ENCODE measurements at regions of chr16 and their contacts with region 1.

Region 1: GRCh38 chr16:10737068-10737625 is 6.5 kb upstream of the NUBP1 start:
- DNase-seq: peak; percentile 80
- H3K4me3 Mint-ChIP-seq: no peak overlapping the region
- H3K27ac Mint-ChIP-seq: no peak overlapping the region
- H3K4me1 Mint-ChIP-seq: no peaks in the 10 kb centered on the region
- H3K27me3 Mint-ChIP-seq: no peaks in the 10 kb centered on the region
- CTCF ChIP-seq: peak; percentile 78

Region 2: DNA sequence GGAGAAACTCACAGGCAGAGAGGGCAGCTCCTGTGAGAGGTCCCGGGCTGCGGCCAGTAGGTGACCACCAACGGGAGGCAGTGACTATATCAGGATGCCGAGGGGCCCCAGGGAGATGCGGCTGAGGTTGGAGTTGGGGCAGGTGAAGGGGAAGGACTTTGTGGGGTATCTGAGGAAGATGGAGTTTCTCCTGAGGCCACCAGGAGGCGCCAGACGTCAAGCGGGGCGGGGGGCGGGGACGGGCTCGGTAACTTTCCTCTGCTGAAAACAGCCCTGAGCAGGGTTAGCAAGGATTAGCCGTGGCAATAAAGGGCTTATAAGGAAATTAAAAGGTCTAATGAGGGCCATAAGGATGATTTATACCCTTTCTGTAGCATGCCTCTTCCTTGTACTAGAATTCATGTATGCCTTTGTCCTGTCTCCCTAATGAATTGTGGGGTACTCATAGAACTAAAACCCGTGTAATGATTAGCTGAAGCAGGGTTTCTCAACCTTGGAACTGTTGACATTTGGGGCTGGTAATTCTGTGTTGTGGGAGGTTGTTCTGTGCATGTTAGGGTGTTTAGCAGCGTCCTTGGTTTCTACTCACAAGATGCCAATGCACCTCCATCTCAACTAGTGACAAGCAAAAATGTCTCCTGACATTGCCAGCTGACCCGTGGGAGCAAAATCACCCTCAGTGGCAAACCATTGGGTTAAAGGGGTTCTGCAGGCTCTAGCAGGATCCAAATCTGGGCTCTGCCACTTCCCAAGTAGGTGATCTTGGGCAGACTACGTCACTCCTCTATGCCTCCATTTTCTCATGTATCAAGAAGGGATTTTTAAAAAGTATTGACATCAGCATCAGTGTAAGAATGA is 480.1 kb before region 1 on chr16:
- CTCF ChIA-PET with region 1: interaction called, 5 read pairs
- POLR2A ChIA-PET with region 1: interaction called, 3 read pairs
- intact Hi-C with region 1: loop called (anchors 1 kb)
- DNase-seq: peak; percentile 46
- H3K4me3 Mint-ChIP-seq: no peak overlapping the region
- H3K27ac Mint-ChIP-seq: no peak overlapping the region
- H3K4me1 Mint-ChIP-seq: peaks cover 11% of the 10 kb centered on the region
- H3K27me3 Mint-ChIP-seq: no peaks in the 10 kb centered on the region
- CTCF ChIP-seq: peak; percentile 81

Region 3: GRCh38 chr16:10325783-10326543 is 411.2 kb before region 1 on chr16:
- CTCF ChIA-PET with region 1: interaction called, 14 read pairs
- POLR2A ChIA-PET with region 1: no interaction called
- intact Hi-C with region 1: no loop called
- DNase-seq: no peak
- H3K4me3 Mint-ChIP-seq: no peak overlapping the region
- H3K27ac Mint-ChIP-seq: no peak overlapping the region
- H3K4me1 Mint-ChIP-seq: peaks cover 4% of the 10 kb centered on the region
- H3K27me3 Mint-ChIP-seq: no peaks in the 10 kb centered on the region
- CTCF ChIP-seq: no peak

Region 4: GRCh38 chr16:10529895-10530669 is 207.1 kb before region 1 on chr16:
- CTCF ChIA-PET with region 1: interaction called, 10 read pairs
- POLR2A ChIA-PET with region 1: no interaction called
- intact Hi-C with region 1: no loop called
- DNase-seq: no peak
- H3K4me3 Mint-ChIP-seq: no peak overlapping the region
- H3K27ac Mint-ChIP-seq: no peak overlapping the region
- H3K4me1 Mint-ChIP-seq: no peaks in the 10 kb centered on the region
- H3K27me3 Mint-ChIP-seq: no peaks in the 10 kb centered on the region
- CTCF ChIP-seq: no peak

Region 5: DNA sequence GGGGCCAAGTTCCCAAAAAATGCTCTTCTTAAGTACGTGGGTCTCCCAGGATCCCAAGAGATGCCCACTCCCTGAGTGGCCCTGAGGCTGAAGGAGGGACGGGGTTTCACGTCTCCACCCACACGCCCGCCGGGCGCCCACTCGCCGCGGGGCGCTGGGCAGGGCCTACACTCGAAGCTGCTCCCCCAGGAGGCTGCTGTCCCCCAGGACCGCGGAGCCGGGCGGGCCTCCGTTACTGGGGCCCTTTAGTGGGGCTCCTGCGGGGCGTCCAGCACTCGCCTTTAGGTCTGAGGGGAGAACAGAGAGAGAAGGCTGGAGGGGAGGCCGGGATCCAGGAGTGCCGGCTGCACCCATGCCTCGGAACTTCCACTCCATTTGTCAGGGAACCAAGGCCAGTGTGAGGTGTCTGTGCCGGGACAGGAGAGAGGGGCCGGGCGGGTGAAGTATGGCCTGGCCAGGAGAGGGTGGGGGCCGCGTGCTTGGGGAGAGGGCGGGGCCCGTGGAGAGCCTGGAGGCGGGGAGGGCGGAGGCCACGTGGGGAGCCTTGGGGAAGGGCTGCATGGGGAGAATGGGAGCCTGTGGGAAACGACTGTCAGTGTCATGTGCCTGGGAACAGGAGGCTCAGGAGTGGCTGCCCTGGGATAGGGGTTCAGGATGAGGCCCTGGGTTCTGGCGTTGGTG is 25.3 kb after region 1 on chr16:
- CTCF ChIA-PET with region 1: no interaction called
- POLR2A ChIA-PET with region 1: no interaction called
- intact Hi-C with region 1: no loop called
- DNase-seq: no peak
- H3K4me3 Mint-ChIP-seq: no peak overlapping the region
- H3K27ac Mint-ChIP-seq: no peak overlapping the region
- H3K4me1 Mint-ChIP-seq: no peaks in the 10 kb centered on the region
- H3K27me3 Mint-ChIP-seq: no peaks in the 10 kb centered on the region
- CTCF ChIP-seq: no peak

Region 6: GRCh38 chr16:10918294-10919002 is 181.3 kb after region 1 on chr16:
- CTCF ChIA-PET with region 1: interaction called, 37 read pairs
- POLR2A ChIA-PET with region 1: no interaction called
- intact Hi-C with region 1: loop called (anchors 1 kb)
- DNase-seq: peak; percentile 93
- H3K4me3 Mint-ChIP-seq: no peak overlapping the region
- H3K27ac Mint-ChIP-seq: no peak overlapping the region
- H3K4me1 Mint-ChIP-seq: no peaks in the 10 kb centered on the region
- H3K27me3 Mint-ChIP-seq: no peaks in the 10 kb centered on the region
- CTCF ChIP-seq: peak; percentile 90